B cell (primary cell): ENCODE measurements at regions of chr1 and their contacts with region 1.

Region 1: DNA sequence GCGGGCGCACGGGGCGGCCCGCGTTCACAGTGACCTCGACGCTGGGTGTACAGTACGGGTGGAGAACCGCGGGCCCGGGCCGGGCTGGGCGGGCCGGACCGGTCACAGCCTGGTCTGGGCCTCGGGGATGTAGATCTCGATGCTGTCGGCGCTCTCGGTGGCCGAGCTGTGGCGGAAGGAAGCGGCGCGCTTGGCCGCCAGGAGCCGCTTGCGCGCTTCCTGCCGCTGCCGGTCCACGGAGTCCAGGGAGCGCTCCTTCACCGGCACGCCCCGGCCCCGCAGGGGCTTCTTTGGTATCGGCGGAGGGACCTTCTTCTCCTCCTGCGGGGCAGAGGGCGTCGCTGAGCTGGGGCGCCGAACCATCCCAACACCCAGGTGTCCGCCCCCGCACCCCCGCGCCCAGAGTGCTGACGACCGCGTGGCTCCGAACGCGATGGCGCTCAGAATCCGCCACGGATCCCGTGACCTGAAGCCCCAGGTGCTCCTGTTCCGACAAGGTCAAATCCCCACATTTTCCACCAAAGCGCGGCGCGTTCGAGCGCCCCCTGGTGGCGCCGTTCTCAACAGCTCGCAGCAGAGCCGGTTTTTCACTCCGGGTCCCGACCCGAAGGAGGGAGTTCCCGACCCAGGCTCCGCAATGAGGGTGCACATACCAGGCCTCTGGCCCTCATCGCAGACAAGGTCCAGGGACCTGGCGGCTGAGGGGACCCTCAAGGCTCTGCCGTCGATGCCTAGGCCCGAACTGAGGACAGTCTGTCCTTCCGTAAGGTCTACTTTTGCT is 6.6 kb upstream of the SMIM12 start:
- DNase-seq: peak; percentile 96
- ATAC-seq: peak; percentile 78
- H3K4me3 ChIP-seq: peak overlapping the region; percentile 30 to 78 (median 76)
- H3K4me3 Mint-ChIP-seq: peak overlapping the region; percentile 96
- H3K27ac ChIP-seq: peak overlapping the region; percentile 75 to 81
- H3K27ac Mint-ChIP-seq: peak overlapping the region; percentile 94
- H3K4me1 ChIP-seq: peaks cover 9 to 17% of the 10 kb centered on the region in 2 donors
- H3K4me1 Mint-ChIP-seq: peaks cover 32% of the 10 kb centered on the region
- H3K27me3 ChIP-seq: no peaks in the 10 kb centered on the region
- H3K27me3 Mint-ChIP-seq: no peaks in the 10 kb centered on the region
- CTCF ChIP-seq: peak; percentile 98

Region 2: GRCh38 chr1:34786521-34787325 is 79.4 kb before region 1 on chr1:
- CTCF ChIA-PET with region 1: interaction called, 7 read pairs
- POLR2A ChIA-PET with region 1: no interaction called
- intact Hi-C with region 1: loop called (anchors 2 kb)
- DNase-seq: peak; percentile 70
- ATAC-seq: peak; percentile 62
- H3K4me3 ChIP-seq: no peak overlapping the region
- H3K4me3 Mint-ChIP-seq: no peak overlapping the region
- H3K27ac ChIP-seq: no peak overlapping the region
- H3K27ac Mint-ChIP-seq: no peak overlapping the region
- H3K4me1 ChIP-seq: peaks cover under 1 to 4% of the 10 kb centered on the region in 2 donors
- H3K4me1 Mint-ChIP-seq: peaks cover 15% of the 10 kb centered on the region
- H3K27me3 ChIP-seq: peaks cover 0 to 32% (median 8%) of the 10 kb centered on the region in 4 experiments
- H3K27me3 Mint-ChIP-seq: peaks cover 42% of the 10 kb centered on the region
- CTCF ChIP-seq: peak; percentile 82

Region 3: DNA sequence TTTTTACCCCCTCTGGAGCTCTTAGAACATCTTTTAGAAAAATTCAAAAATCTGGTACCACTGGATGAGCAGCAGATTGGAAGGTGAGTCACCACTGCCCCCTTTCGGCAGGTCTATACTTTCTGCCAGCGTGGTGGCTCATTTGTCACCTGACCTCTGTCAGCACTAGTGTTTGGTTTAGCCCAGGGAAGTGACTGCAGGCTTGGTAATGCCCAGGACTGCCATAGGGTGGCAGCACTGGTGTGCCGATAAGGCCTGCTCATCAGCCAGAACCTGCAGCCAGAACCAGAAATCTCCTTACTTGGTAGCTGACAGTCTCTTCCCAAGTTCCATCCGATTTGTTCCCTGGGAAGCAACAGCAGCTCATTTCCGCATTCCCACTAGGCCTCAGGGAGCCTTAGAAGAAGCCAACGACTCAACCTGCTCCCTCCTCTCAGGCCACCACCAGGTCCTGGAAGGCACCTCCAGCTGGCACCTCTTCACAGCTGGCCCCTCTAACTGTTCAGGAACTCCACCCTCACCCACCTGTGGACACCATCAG is 13.4 kb before region 1 on chr1:
- CTCF ChIA-PET with region 1: interaction called, 35 read pairs
- POLR2A ChIA-PET with region 1: no interaction called
- intact Hi-C with region 1: loop called (anchors 1 kb)
- DNase-seq: peak; percentile 89
- ATAC-seq: peak; percentile 100
- H3K4me3 ChIP-seq: no peak overlapping the region
- H3K4me3 Mint-ChIP-seq: no peak overlapping the region
- H3K27ac ChIP-seq: no peak overlapping the region
- H3K27ac Mint-ChIP-seq: peak overlapping the region; percentile 41
- H3K4me1 ChIP-seq: peaks cover under 1 to 6% of the 10 kb centered on the region in 2 donors
- H3K4me1 Mint-ChIP-seq: peaks cover 16% of the 10 kb centered on the region
- H3K27me3 ChIP-seq: no peaks in the 10 kb centered on the region
- H3K27me3 Mint-ChIP-seq: no peaks in the 10 kb centered on the region
- CTCF ChIP-seq: peak; percentile 92

Region 4: GRCh38 chr1:34907487-34908090 is 41.4 kb after region 1 on chr1:
- CTCF ChIA-PET with region 1: no interaction called
- POLR2A ChIA-PET with region 1: no interaction called
- intact Hi-C with region 1: no loop called
- DNase-seq: no peak
- ATAC-seq: no peak
- H3K4me3 ChIP-seq: no peak overlapping the region
- H3K4me3 Mint-ChIP-seq: no peak overlapping the region
- H3K27ac ChIP-seq: no peak overlapping the region
- H3K27ac Mint-ChIP-seq: no peak overlapping the region
- H3K4me1 ChIP-seq: no peaks in the 10 kb centered on the region
- H3K4me1 Mint-ChIP-seq: no peaks in the 10 kb centered on the region
- H3K27me3 ChIP-seq: no peaks in the 10 kb centered on the region
- H3K27me3 Mint-ChIP-seq: no peaks in the 10 kb centered on the region
- CTCF ChIP-seq: no peak

Region 5: DNA sequence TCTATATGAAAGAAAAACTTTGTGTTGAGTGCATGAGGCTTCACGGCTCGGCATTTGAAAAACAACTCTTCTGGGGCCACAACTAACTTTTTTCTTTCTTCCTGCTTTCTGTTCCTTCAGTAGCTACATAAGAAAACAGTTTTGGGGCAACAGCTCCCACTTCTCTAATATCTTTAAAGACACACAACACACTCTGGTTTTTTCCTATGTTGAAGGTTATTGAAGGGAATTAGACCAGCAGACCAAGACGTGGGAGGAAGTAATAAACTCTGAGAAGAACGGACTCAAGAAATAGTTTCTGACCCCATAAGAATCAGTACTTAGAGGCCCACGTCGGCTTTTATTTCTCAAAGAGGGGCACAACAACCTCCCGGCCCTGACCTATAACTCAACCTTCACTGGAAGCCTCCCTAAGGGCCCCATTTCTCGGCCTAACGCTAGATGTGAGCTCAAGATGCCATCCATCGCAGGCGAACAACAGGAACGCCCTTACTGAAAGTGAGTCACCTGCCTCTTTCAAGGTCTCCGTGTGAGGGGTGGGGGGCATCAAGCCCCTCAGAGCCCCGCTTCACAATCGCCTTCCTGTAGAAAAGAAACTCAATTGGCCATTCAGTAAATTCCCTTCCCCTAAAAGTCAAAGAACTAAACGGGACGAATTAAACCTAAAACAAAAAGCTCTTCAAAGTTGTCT is 164.7 kb after region 1 on chr1:
- CTCF ChIA-PET with region 1: no interaction called
- POLR2A ChIA-PET with region 1: no interaction called
- intact Hi-C with region 1: loop called (anchors 1 kb)
- DNase-seq: peak; percentile 66
- ATAC-seq: peak; percentile 22
- H3K4me3 ChIP-seq: peak overlapping the region; percentile 85 to 98 (median 96)
- H3K4me3 Mint-ChIP-seq: peak overlapping the region; percentile 99
- H3K27ac ChIP-seq: peak overlapping the region; percentile 66 to 87
- H3K27ac Mint-ChIP-seq: peak overlapping the region; percentile 95
- H3K4me1 ChIP-seq: peaks cover 19 to 23% of the 10 kb centered on the region in 2 donors
- H3K4me1 Mint-ChIP-seq: peaks cover 42% of the 10 kb centered on the region
- H3K27me3 ChIP-seq: no peaks in the 10 kb centered on the region
- H3K27me3 Mint-ChIP-seq: no peaks in the 10 kb centered on the region
- CTCF ChIP-seq: no peak

Region 6: DNA sequence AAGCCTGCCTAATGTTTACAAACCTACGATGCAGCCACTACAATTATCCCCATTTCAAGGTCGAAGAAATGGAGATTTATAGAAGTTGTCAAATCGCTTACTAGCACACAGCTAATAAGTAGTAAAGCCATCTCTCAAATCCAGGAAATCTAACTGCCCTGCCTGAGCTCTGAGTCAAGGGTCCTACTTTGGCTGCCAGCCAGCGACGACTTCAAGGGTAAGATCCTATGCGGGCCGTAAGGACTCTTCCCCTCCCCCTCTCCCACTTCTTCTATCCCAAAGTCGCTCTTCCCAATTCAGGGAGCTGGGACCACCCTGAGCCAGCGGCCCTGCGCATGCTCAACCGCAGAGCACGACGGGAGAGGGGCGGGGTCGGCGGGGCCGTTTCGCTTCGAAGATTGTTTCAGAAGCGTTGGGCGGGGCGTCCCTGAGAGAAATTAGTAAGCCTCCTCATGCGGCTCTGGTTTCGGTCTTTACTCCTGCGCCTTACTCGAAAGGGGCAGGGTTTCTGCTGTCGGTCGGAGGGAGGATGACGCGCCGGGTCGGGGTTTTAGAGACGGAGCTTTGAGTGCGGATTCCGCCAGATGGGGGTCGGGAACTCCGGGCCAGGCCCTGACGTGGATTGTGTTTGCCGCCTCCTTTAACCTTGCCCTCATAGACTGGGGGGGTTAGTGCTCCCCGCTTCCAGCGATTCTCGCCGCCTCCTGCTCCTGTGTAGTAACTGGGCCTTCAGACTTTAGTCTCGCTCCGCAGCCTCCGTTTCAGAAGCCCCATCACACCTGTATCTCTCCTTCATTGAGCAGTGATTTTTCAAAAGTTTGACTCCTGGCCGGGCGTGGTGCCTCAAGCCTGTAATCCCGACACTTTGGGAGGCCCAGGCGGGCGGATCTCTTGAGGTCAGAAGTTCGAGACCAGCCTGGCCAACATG is 213.1 kb after region 1 on chr1 and contains the start of gene ZMYM1:
- CTCF ChIA-PET with region 1: no interaction called
- POLR2A ChIA-PET with region 1: interaction called, 3 read pairs
- intact Hi-C with region 1: loop called (anchors 1 kb)
- DNase-seq: peak; percentile 90
- ATAC-seq: peak; percentile 92
- H3K4me3 ChIP-seq: peak within 1 kb of the TSS; percentile 48 to 83 (median 71)
- H3K4me3 Mint-ChIP-seq: peak within 1 kb of the TSS; percentile 99
- H3K27ac ChIP-seq: peak within 1 kb of the TSS; percentile 86 to 95
- H3K27ac Mint-ChIP-seq: peak within 1 kb of the TSS; percentile 100
- H3K4me1 ChIP-seq: peaks cover 7 to 17% of the 10 kb centered on the region in 2 donors
- H3K4me1 Mint-ChIP-seq: peaks cover 20% of the 10 kb centered on the region
- H3K27me3 ChIP-seq: peaks cover 0 to 5% (median 0%) of the 10 kb centered on the region in 4 experiments
- H3K27me3 Mint-ChIP-seq: peaks cover 14% of the 10 kb centered on the region
- CTCF ChIP-seq: no peak
- total RNA-seq, gene ZMYM1: 17.6 and 18.3 TPM in 2 replicates

Region 7: DNA sequence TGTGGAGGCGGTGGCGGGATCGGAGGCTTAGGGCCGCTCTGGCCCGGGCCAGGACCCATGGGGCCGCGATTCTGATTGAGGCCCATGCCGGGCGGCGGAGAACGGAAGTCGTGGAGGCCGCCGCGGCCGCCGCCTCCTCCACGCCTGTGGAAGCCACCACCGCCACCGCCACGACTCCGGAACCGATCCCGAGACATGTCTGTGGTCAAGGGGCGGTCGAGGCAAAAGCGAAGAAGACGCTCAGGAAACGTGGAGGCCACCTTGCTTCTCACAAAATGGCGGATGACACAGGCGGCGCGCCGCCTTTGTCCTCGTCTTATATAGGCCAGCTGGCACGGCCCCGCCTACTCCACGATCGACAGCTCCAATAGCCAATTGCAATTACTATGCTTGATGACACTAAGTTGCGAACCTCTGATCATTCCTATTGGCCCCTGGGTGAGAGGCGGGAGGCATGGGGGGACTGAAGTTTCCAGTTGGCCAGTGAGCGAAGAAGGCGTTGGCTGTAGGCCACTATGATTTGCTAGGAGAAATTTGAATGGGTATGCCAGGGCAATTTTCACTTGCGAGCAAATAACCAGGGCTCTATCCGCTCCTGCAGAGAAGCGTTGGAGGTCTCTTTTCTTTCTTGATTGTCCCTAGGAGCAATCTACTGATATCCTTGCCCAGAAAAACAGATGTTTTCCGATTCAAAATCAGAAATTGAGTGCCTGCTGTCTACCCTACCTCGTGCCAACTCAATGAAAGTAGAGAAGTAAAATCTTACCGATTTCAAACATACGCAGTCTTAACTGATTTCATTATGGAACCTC is 326.9 kb after region 1 on chr1 and contains the start of gene SFPQ:
- CTCF ChIA-PET with region 1: no interaction called
- POLR2A ChIA-PET with region 1: interaction called, 4 read pairs
- intact Hi-C with region 1: loop called (anchors 5 kb)
- DNase-seq: peak; percentile 99
- ATAC-seq: peak; percentile 91
- H3K4me3 ChIP-seq: peak within 1 kb of the TSS; percentile 75 to 97 (median 88)
- H3K4me3 Mint-ChIP-seq: peak within 1 kb of the TSS; percentile 97
- H3K27ac ChIP-seq: peak within 1 kb of the TSS; percentile 95 to 96
- H3K27ac Mint-ChIP-seq: peak within 1 kb of the TSS; percentile 100
- H3K4me1 ChIP-seq: peaks cover 24 to 29% of the 10 kb centered on the region in 2 donors
- H3K4me1 Mint-ChIP-seq: peaks cover 43% of the 10 kb centered on the region
- H3K27me3 ChIP-seq: no peaks in the 10 kb centered on the region
- H3K27me3 Mint-ChIP-seq: no peaks in the 10 kb centered on the region
- CTCF ChIP-seq: no peak
- total RNA-seq, gene SFPQ: 411 and 412 TPM in 2 replicates